ENCODE measurements at regions of chr17 and their contacts with region 1.

Region 1: DNA sequence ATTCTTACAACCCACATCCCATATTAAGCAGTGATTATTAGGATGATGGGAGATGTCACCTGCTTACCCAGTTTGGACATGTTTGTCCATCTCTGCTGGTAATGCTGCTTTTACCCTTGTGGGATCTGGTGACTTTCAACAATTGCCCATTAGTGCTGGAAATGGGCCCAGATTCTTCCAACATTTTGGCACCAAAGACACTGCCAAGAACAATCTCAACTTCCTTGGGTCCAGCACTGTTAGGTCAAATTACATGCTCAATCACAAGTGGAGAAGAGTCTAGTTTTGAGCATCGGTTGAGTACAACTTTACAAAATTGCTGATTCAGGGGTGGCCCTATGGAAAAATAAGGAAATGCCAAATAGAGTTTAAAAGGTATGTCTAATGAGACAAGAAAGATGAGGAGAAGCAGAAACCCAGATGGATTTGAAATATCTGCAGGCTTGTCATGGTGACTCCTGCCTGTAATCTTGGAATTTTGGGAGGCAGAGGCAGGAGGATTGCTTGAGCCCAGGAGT is 13.0 kb upstream of the ZFP3 start:
- DNase-seq: no peak
- H3K4me3 ChIP-seq: no peak overlapping the region
- H3K27ac ChIP-seq: no peak overlapping the region
- H3K27me3 ChIP-seq: no peaks in the 10 kb centered on the region
- CTCF ChIP-seq: no peak

Region 2: DNA sequence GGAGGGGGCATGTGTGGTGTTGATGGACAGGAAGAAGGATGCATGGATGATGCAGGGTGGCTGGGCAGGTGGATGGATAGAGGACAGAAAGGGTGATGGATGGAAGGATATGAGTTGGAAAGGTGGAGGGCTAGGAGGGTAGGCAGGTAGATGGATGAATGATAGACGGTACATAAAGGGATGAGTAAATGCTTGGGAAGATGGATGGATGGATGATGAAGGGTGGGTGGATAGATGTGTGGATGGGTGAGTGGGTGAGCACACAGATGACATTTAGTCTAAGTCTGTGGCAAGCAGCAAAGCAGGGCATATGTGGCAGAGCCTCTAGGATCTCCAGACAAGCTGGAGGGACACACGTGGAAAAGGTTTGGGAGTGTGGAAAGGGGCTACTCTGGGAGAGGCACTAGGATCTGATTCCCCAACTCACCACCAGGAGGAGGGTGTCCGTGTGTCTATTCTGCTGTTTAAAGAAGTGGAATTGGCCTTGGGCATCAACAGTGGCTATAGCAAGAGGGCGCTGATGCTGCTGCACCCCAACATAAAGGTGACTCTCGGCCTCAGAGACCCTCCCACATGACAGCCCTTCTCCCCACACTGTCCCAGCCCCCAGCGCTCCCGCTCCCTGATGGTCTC is 250.1 kb before region 1 on chr17:
- intact Hi-C with region 1: loop called in 1 of 2 experiments (anchors 10 kb)
- DNase-seq: no peak
- H3K4me3 ChIP-seq: no peak overlapping the region
- H3K27ac ChIP-seq: no peak overlapping the region
- H3K27me3 ChIP-seq: no peaks in the 10 kb centered on the region
- CTCF ChIP-seq: no peak

Region 3: GRCh38 chr17:4913994-4914393 is 151.3 kb before region 1 on chr17:
- intact Hi-C with region 1: loop called (anchors 5 kb)
- DNase-seq: no peak
- H3K4me3 ChIP-seq: no peak overlapping the region
- H3K27ac ChIP-seq: no peak overlapping the region
- H3K27me3 ChIP-seq: no peaks in the 10 kb centered on the region
- CTCF ChIP-seq: no peak

Region 4: GRCh38 chr17:4966844-4967538 is 98.3 kb before region 1 on chr17:
- intact Hi-C with region 1: no loop called
- DNase-seq: peak; percentile 95 to 100 (median 99)
- H3K4me3 ChIP-seq: peak overlapping the region; percentile 62 to 99 (median 85)
- H3K27ac ChIP-seq: peak overlapping the region; percentile 90 to 100 (median 99)
- H3K27me3 ChIP-seq: no peaks in the 10 kb centered on the region
- CTCF ChIP-seq: peak in 8 of 56 donors; percentile 2 to 34 (median 10)